ENCODE measurements at regions of chr1 and their contacts with region 1.

Region 1: GRCh38 chr1:167721617-167722151 is at the start of gene MPZL1:
- DNase-seq: peak; percentile 99
- CTCF ChIP-seq: no peak

Region 2: GRCh38 chr1:167467126-167467710 is 254.5 kb before region 1 on chr1:
- in situ Hi-C with region 1: no loop called
- DNase-seq: no peak
- CTCF ChIP-seq: no peak

Region 3: GRCh38 chr1:167599957-167600581 is 121.6 kb before region 1 on chr1:
- in situ Hi-C with region 1: no loop called
- DNase-seq: peak; percentile 62
- CTCF ChIP-seq: peak; percentile 72

Region 4: DNA sequence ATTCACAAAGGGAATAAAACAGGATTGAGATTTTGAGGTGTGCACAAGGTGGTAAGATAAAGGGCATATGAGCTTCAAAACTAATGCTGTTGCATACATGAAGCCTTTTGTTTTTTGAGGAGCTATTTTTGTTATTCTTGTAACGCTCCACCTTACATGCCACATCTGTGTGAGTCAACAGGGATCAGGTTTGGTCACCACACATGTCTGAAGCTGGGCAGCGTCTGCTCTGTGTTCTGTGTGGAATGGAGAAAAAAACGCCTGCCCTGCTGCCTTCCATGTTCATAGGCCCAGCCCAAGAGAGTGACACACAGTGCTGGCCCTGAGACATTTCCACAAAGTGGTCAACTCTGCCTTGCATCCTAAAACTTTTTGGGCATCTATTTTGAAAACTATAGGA is 67.8 kb after region 1 on chr1:
- in situ Hi-C with region 1: loop called (anchors 10 kb)
- DNase-seq: no peak
- CTCF ChIP-seq: no peak